Activated T-helper 2 cell treated with anti-CD3 and anti-CD28 coated beads, Interferon-gamma antibody, Interleukin-2, Interleukin-4, amounts not matched to agents 10 μg/mL and 5 μg/mL and 100 μg/mL, durations not matched to agents 14 hours and 24 hours and 36 hours (primary cell): ENCODE measurements at regions of chr11 and their contacts with region 1.

Region 1: DNA sequence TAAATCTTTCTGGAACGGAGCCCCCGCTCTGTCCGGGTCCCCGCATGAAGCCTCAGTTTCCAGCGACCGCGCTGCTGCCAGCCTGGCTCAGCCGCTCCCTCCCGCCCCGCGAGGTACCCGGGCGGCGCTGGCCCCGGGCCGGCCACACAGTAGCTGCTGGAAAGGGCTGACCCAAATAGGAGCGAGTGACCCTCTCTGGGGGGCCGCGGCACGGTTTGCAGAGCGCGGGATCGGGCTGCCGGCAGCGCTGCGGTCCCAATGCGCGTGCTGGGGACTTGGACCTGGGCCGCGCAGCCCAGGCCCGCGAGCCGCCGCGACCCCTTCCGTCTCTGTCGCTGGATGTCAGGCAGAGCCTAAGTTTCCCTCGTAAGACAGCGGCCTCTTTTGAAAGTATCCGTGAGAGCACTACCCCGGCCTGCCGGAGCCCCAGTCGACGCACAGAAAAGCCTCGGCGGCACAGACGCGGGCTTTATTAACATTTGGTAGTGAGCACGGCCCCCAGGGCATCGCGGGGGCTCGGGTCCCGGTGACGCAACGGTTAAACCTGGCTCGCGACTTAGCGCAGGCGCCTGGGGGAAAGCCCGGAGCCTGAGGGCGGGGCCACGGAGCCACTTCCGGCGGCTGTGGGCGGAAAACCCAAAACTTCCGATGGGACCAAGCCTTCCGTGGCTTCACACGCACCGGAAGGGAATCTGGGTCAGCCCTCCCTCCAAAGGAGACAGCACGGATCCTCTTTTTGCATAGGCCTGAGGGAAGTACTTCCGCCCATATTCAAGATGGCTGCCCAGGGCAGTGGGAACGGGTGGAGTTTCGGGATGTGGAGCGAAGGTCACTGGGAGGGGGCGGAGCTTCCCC is 14.9 kb downstream of the BAD start:
- DNase-seq: peak; percentile 97
- H3K4me3 Mint-ChIP-seq: peak overlapping the region; percentile 91
- H3K27ac Mint-ChIP-seq: peak overlapping the region; percentile 84
- H3K4me1 Mint-ChIP-seq: peaks cover 15% of the 10 kb centered on the region
- H3K27me3 Mint-ChIP-seq: no peaks in the 10 kb centered on the region

Region 2: DNA sequence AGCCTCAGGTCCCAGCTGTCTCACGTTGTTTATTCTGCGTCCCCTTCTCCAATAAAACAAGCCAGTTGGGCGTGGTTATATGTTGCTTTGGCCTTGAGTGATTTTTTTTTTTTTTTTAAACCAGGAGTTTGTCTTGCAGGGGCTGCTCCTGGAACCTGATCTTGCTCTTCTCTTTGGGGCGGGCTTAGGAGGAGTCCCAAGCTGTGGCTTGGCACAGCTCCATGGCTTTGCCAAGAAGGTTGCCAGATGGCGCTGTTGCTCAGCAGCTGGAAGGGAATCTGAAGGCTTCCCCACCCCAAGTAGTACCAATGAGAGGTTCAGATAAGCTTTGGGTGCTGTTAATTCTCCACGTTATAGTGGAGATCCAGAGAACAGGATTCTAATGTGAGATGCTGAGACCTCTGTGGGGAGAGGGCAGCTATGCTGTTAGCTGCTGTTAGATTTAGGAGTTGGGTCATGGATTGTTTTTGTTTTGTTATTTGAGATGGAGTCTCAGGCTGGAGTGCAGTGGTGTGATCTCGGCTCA is 65.1 kb before region 1 on chr11:
- intact Hi-C with region 1: loop called (anchors 2 kb)
- DNase-seq: peak; percentile 67
- H3K4me3 Mint-ChIP-seq: peak overlapping the region; percentile 75
- H3K27ac Mint-ChIP-seq: peak overlapping the region; percentile 81
- H3K4me1 Mint-ChIP-seq: peaks cover 21% of the 10 kb centered on the region
- H3K27me3 Mint-ChIP-seq: no peaks in the 10 kb centered on the region

Region 3: GRCh38 chr11:64225612-64226506 is 43.7 kb before region 1 on chr11 and contains the starts of genes NUDT22 and TRPT1:
- intact Hi-C with region 1: no loop called
- DNase-seq: peak; percentile 91
- H3K4me3 Mint-ChIP-seq: peak within 1 kb of the TSS; percentile 84
- H3K27ac Mint-ChIP-seq: peak within 1 kb of the TSS; percentile 62
- H3K4me1 Mint-ChIP-seq: peaks cover 21% of the 10 kb centered on the region
- H3K27me3 Mint-ChIP-seq: no peaks in the 10 kb centered on the region
- total RNA-seq, gene NUDT22: 72.8 and 77.0 TPM in 2 replicates
- total RNA-seq, gene TRPT1: 33.7 and 35.5 TPM in 2 replicates

Region 4: GRCh38 chr11:64240394-64241174 is 29.0 kb before region 1 on chr11 and contains the start of gene FKBP2:
- intact Hi-C with region 1: loop called (anchors 1 kb)
- DNase-seq: peak; percentile 98
- H3K4me3 Mint-ChIP-seq: peak within 1 kb of the TSS; percentile 94
- H3K27ac Mint-ChIP-seq: peak within 1 kb of the TSS; percentile 93
- H3K4me1 Mint-ChIP-seq: peaks cover 21% of the 10 kb centered on the region
- H3K27me3 Mint-ChIP-seq: no peaks in the 10 kb centered on the region
- total RNA-seq, gene FKBP2: 36.6 and 37.1 TPM in 2 replicates

Region 5: GRCh38 chr11:64246871-64247728 is 22.5 kb before region 1 on chr11 and contains the start of gene PPP1R14B:
- intact Hi-C with region 1: loop called (anchors 1 kb)
- DNase-seq: peak; percentile 78
- H3K4me3 Mint-ChIP-seq: peak within 1 kb of the TSS; percentile 91
- H3K27ac Mint-ChIP-seq: peak within 1 kb of the TSS; percentile 88
- H3K4me1 Mint-ChIP-seq: peaks cover 28% of the 10 kb centered on the region
- H3K27me3 Mint-ChIP-seq: no peaks in the 10 kb centered on the region
- total RNA-seq, gene PPP1R14B: 262 and 273 TPM in 2 replicates

Region 6: GRCh38 chr11:64284048-64284961 is 14.7 kb after region 1 on chr11 and contains the start of gene BAD:
- intact Hi-C with region 1: loop called (anchors 1 kb)
- DNase-seq: peak; percentile 88
- H3K4me3 Mint-ChIP-seq: peak within 1 kb of the TSS; percentile 85
- H3K27ac Mint-ChIP-seq: peak within 1 kb of the TSS; percentile 93
- H3K4me1 Mint-ChIP-seq: peaks cover 9% of the 10 kb centered on the region
- H3K27me3 Mint-ChIP-seq: no peaks in the 10 kb centered on the region
- total RNA-seq, gene BAD: 33.2 and 34.7 TPM in 2 replicates

Region 7: GRCh38 chr11:64341851-64342791 is 72.5 kb after region 1 on chr11:
- intact Hi-C with region 1: no loop called
- DNase-seq: peak; percentile 91
- H3K4me3 Mint-ChIP-seq: peak overlapping the region; percentile 26
- H3K27ac Mint-ChIP-seq: no peak overlapping the region
- H3K4me1 Mint-ChIP-seq: peaks cover 26% of the 10 kb centered on the region
- H3K27me3 Mint-ChIP-seq: no peaks in the 10 kb centered on the region